CD8-positive, alpha-beta T cell (primary cell): ENCODE measurements at regions of chr2 and their contacts with region 1.

Region 1: DNA sequence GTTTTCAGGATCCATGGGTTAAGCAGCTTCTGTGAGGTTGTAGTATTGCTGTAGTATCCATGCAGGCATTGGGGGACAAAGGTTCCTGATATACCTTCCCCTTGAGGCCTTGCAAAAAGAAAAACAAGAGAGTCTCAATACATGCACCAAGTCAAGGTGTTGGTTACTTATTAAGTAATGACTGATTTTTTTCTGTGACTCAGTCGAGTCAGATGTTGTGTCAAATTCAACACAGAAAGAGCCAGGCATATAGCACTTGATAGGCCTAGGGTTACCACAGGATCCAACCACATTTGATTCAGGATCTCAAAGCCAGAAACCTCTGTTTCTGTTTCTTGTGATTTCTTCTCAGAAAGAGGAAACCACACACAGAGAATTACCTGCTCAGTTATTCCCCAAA is 24.9 kb upstream of the CD8A start:
- DNase-seq: peak in 3 of 9 experiments; percentile 48 to 80 (median 56)
- ATAC-seq: peak; percentile 72
- H3K4me3 ChIP-seq: no peak overlapping the region
- H3K4me3 Mint-ChIP-seq: peak overlapping the region; percentile 76
- H3K27ac ChIP-seq: peak overlapping the region; percentile 1 to 62
- H3K27ac Mint-ChIP-seq: peak overlapping the region; percentile 97
- H3K4me1 ChIP-seq: peaks cover 91% of the 10 kb centered on the region
- H3K4me1 Mint-ChIP-seq: peaks cover 82% of the 10 kb centered on the region
- H3K27me3 ChIP-seq: no peaks in the 10 kb centered on the region
- H3K27me3 Mint-ChIP-seq: no peaks in the 10 kb centered on the region
- CTCF ChIP-seq: no peak

Region 2: GRCh38 chr2:86825693-86826381 is 10.2 kb after region 1 on chr2:
- CTCF ChIA-PET with region 1: interaction called, 81 read pairs
- POLR2A ChIA-PET with region 1: interaction called, 198 read pairs
- intact Hi-C with region 1: loop called in 1 of 2 experiments (anchors 1 kb)
- DNase-seq: peak; percentile 70 to 96 (median 82)
- ATAC-seq: peak; percentile 84
- H3K4me3 ChIP-seq: peak overlapping the region; percentile 85 to 88
- H3K4me3 Mint-ChIP-seq: peak overlapping the region; percentile 90
- H3K27ac ChIP-seq: peak overlapping the region; percentile 81 to 91
- H3K27ac Mint-ChIP-seq: peak overlapping the region; percentile 99
- H3K4me1 ChIP-seq: peaks cover 76% of the 10 kb centered on the region
- H3K4me1 Mint-ChIP-seq: peaks cover 77% of the 10 kb centered on the region
- H3K27me3 ChIP-seq: no peaks in the 10 kb centered on the region
- H3K27me3 Mint-ChIP-seq: no peaks in the 10 kb centered on the region
- CTCF ChIP-seq: no peak